Caco-2 (cell line): ENCODE measurements at regions of chr3 and their contacts with region 1.

Region 1: DNA sequence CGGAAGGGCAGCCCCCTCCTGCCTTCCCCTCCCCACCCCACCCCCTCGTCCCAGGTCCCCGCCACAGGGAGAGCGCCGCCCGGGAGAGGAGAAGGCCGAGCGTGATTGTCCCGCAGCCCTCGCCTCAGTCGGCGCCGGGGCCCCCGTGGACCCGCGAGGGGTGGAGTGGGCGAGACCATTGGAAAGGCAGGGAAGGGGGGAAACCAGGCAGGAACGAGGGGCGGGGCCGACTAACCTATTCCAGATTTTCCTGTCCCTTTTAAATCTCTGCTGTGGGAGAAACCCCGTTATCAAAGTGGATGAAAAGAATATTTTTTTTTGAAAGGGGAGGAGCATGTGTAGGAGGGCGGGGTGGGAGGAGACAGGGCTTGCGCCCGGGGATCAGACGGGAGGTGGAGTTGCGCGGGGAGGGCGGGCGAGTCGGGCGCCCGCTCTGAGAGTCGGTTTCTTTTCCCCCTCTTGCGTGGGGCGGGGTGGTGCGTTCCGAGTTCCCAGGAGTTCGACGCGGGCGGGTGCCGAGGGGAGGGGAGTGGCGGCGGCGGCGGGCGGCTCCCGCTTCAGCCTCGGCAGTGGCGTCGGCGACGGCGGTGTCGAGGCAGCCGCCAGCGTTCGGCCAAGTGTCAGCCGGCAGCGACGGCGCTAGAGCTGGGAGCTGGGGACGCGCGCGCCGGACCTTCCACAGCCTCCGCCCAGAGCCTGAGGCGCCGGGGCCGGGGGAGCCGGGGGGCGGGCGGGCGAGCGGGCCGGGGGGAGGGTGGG is at the start of gene NECTIN3:
- DNase-seq: peak; percentile 95 to 97
- H3K4me3 ChIP-seq: peak within 1 kb of the TSS; percentile 92
- H3K4me3 Mint-ChIP-seq: peak within 1 kb of the TSS; percentile 98
- H3K27ac Mint-ChIP-seq: peak within 1 kb of the TSS; percentile 77
- H3K4me1 ChIP-seq: peaks cover 20% of the 10 kb centered on the region
- H3K4me1 Mint-ChIP-seq: peaks cover 15% of the 10 kb centered on the region
- H3K27me3 ChIP-seq: no peaks in the 10 kb centered on the region
- H3K27me3 Mint-ChIP-seq: no peaks in the 10 kb centered on the region
- CTCF ChIP-seq: no peak
- total RNA-seq, gene NECTIN3: 75.8 and 81.0 TPM in 2 replicates

Region 2: DNA sequence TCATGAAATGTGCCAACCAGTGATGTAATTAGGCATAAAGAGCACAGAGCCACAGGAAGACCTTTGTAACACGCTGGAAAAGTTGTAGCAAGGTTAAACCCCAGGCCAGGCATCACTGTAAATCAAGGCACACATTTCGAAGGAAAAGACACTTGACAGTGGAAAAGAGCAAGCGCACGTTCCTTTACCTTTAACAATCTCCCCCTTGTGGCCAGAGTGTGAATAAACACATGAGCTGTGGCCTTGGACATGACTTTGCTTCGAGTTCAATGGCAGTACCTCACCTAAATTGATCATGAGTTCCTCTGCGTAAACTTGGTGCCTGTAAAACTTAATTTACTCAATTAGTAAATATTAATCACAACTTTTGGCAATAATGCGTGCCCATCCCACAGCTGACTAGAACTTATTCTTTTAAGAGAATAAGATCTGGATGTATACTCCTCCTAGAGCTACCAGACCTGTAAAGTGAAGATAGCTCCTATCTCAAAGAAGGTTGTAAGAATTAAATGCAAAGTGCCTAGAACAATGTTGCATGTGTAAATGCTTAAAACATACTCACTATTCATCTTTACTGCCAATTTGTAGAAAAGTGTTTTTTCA is 756.8 kb before region 1 on chr3:
- CTCF ChIA-PET with region 1: no interaction called
- POLR2A ChIA-PET with region 1: no interaction called
- intact Hi-C with region 1: loop called (anchors 10 kb)
- DNase-seq: peak; percentile 57 to 67
- H3K4me3 ChIP-seq: no peak overlapping the region
- H3K4me3 Mint-ChIP-seq: no peak overlapping the region
- H3K27ac Mint-ChIP-seq: no peak overlapping the region
- H3K4me1 ChIP-seq: no peaks in the 10 kb centered on the region
- H3K4me1 Mint-ChIP-seq: no peaks in the 10 kb centered on the region
- H3K27me3 ChIP-seq: no peaks in the 10 kb centered on the region
- H3K27me3 Mint-ChIP-seq: no peaks in the 10 kb centered on the region
- CTCF ChIP-seq: peak; percentile 57 to 74

Region 3: DNA sequence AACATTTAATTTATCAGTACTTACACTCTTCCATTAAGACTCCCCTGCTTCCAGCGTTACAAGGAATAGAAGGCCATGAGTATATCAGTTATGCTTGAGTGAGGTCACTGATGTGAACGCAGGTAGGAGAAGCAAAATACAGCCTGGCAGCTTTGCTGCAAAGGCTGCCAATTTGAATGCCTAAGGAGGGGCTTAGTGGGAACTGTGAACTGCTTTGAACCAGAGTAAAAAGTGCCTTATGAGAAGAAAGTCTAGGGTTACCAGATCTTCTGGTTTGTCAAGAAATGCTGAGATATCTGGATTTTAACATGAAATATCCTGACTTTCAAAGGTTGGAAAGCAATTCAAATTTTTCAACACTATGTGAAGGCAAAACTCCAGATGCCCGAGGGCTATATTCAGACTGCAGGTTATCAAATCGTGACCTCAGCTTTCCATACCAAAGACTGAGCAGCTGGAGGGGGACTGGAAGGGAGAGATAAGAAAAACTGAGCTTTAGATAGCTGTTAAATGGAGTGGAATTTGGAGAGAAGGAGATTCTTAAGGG is 446.2 kb before region 1 on chr3:
- CTCF ChIA-PET with region 1: no interaction called
- POLR2A ChIA-PET with region 1: no interaction called
- intact Hi-C with region 1: loop called (anchors 2 kb)
- DNase-seq: peak; percentile 82 to 89
- H3K4me3 ChIP-seq: no peak overlapping the region
- H3K4me3 Mint-ChIP-seq: peak overlapping the region; percentile 63
- H3K27ac Mint-ChIP-seq: peak overlapping the region; percentile 92
- H3K4me1 ChIP-seq: peaks cover 66% of the 10 kb centered on the region
- H3K4me1 Mint-ChIP-seq: peaks cover 46% of the 10 kb centered on the region
- H3K27me3 ChIP-seq: no peaks in the 10 kb centered on the region
- H3K27me3 Mint-ChIP-seq: no peaks in the 10 kb centered on the region
- CTCF ChIP-seq: no peak

Region 4: DNA sequence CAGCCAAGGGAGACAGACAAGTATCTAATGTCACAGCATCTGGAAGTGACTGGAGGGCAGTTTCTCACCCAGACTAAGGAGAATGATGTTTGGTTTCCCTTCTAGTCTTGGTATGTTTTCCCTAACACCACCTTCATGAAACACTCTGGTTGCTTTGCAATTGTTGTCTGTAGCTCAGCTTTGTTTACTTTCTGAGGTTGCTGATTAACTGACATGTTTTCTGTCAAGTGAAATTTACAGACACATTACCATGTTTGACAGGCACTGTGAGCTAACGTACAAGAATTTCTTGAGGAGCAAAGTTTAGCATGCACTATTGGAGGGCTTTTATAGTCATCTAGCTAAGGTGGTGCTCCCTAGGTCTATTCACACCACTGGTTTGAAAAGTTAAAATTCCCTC is 131.4 kb before region 1 on chr3:
- CTCF ChIA-PET with region 1: no interaction called
- POLR2A ChIA-PET with region 1: no interaction called
- intact Hi-C with region 1: loop called (anchors 10 kb)
- DNase-seq: peak in 1 of 2 experiments; percentile 27
- H3K4me3 ChIP-seq: no peak overlapping the region
- H3K4me3 Mint-ChIP-seq: no peak overlapping the region
- H3K27ac Mint-ChIP-seq: no peak overlapping the region
- H3K4me1 ChIP-seq: peaks cover 14% of the 10 kb centered on the region
- H3K4me1 Mint-ChIP-seq: peaks cover 13% of the 10 kb centered on the region
- H3K27me3 ChIP-seq: no peaks in the 10 kb centered on the region
- H3K27me3 Mint-ChIP-seq: no peaks in the 10 kb centered on the region
- CTCF ChIP-seq: no peak

Region 5: DNA sequence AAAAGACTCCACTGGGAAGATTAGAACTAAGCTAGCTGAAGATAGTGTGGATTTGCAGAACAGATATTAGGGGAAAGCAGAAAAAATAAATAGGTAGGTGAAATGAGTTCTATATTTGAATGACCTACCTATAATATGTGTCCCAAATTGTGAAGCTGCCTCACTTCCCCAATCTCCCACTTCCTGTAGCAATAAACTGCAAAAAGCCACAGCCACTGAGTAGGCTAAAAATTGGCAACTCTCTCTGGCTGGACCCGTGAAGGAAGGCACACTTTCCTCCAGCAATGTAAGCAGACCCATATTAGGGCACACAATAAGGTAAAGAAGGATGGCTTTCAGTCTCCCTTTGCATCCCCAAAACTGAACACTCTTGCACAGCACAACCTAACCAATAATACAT is 43.6 kb before region 1 on chr3:
- CTCF ChIA-PET with region 1: no interaction called
- POLR2A ChIA-PET with region 1: no interaction called
- intact Hi-C with region 1: loop called (anchors 2 kb)
- DNase-seq: no peak
- H3K4me3 ChIP-seq: no peak overlapping the region
- H3K4me3 Mint-ChIP-seq: no peak overlapping the region
- H3K27ac Mint-ChIP-seq: no peak overlapping the region
- H3K4me1 ChIP-seq: no peaks in the 10 kb centered on the region
- H3K4me1 Mint-ChIP-seq: no peaks in the 10 kb centered on the region
- H3K27me3 ChIP-seq: no peaks in the 10 kb centered on the region
- H3K27me3 Mint-ChIP-seq: no peaks in the 10 kb centered on the region
- CTCF ChIP-seq: no peak